ENCODE measurements at regions of chr2 and their contacts with region 1.

Region 1: DNA sequence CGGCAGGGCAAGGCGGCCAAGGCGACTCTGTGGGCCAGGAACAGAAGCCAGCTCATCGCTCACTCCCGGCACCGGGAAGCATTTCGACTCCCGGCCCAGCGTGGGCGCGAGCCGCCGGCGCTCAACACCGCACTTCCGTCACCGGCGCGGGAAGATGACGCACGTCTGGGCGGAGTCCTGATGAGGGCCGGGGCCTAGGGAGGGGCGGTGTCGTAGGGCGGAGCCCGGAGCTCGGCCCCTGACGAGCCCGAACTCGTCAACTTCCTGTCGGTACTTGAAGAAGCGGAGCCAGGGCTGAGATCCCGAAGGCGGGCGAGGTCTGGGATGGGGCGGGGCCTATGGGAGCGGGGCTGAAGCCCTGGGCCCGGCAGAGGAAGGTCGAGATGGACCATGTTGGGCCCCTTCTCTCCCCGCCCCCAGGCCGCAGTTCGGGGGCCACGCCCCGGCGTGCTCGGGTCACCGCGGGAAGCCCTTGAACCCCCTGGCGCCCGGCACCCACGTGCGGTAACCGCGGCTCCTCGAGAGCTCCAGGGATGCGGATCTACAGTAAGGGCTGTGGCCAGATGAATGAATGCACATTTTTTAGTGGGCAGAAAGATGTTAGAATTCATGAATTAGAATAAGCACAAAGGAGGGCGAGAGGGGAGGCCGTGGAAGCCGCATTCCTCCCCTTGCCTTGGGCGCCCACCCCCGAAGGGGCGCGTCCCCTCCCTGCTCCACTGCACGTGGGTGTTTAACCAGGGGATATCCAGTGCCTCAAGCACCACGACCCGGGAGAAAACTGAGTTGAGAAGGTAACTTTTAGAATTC is at the start of gene RNASEH1:
- DNase-seq: peak; percentile 98
- ATAC-seq: peak; percentile 100
- total RNA-seq, gene RNASEH1: 17.3 to 22.2 TPM

Region 2: DNA sequence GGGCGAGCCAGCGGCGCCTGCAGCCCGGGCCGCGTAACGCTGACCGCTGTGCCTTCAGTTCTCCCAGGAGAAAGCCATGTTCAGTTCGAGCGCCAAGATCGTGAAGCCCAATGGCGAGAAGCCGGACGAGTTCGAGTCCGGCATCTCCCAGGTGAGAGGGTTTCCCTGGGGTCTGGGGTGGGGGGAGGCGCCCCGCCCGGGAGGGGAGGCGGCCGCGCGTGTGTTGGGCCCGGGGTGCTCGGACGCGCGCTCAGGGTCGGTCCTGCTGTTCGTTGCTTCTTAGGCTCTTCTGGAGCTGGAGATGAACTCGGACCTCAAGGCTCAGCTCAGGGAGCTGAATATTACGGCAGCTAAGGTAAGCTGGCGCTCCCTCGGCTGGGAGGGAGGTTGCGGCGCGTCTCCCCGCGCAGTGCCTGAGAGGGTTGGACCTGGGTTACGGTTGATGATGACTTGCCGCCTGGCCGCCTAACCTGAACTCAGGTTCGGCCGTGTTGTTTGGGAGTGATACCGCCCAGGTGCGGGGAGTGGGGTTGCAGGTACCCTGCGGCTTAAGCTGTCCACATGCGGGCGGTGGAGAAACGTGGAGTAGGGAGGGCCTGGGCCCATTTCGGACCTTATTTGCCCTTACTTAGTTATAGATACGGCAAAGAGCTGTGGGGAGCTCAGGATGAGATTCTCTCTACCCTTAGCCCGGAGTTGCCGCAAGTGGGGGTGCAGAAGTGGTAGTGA is 17.3 kb after region 1 on chr2:
- intact Hi-C with region 1: loop called in 1 of 2 experiments (anchors 2 kb)
- DNase-seq: no peak
- ATAC-seq: peak; percentile 53 to 69

Region 3: GRCh38 chr2:3633089-3633981 is 74.9 kb after region 1 on chr2:
- intact Hi-C with region 1: no loop called
- DNase-seq: no peak
- ATAC-seq: peak; percentile 20 to 45

Region 4: GRCh38 chr2:3662239-3662638 is 103.8 kb after region 1 on chr2:
- intact Hi-C with region 1: no loop called
- DNase-seq: no peak
- ATAC-seq: no peak

Measured in left cardiac atrium (tissue), 4 donors.